Sigmoid colon (tissue), 7 donors: ENCODE measurements at regions of chr3 and their contacts with region 1.

Region 1: DNA sequence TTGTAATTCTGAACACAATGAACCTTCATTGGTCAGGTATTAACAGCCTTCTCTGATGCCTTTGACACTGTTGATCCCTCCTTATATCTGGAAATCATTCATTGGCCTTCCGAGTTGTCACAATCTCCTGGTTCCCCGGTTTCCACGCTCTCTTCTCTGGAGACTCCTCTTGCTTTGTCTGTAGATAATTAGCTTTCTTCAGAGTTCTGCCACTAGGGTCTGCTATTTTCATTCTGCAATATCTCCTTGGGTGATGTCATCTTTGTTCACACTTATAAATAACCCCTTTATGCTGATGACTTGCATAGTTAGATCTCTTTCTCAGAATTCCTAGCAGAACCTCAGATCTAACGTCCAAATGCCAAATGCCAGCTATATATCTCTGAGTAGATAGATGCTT is 583.8 kb upstream of the ZNF717 start:
- DNase-seq: no peak
- H3K4me3 ChIP-seq: no peak overlapping the region
- H3K27ac ChIP-seq: no peak overlapping the region
- H3K4me1 ChIP-seq: no peaks in the 10 kb centered on the region
- H3K27me3 ChIP-seq: no peaks in the 10 kb centered on the region
- CTCF ChIP-seq: peak in 1 of 4 experiments; percentile 14
- EP300 ChIP-seq: no peak
- POLR2A ChIP-seq: no peak

Region 2: DNA sequence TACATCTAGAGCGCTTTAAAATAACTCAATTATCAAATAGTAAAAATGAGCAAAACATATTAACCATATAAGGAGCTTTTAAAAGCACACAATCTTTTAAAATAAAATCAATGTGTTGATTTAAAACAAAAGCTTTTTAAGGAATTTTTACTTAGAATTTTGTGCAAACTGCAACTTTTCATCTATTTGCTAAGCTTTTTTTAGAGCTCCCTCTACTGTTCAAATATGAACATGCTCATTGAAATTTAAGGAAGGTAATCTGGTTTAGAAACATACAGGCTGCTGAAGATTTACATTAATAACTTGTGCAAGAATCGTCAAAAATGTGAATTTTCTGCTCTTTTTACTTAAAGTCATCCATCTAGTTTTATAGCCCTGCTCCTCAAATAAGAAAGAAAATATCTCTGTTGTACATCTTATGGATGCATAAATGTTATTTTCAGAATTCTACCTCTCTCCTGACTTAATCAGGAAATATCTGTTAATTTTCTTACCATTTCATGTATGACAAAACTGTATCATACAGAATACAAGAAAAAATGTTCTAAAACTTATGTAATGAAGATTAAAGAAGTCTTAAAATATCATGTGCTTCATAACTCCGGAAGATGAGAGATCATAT is 201.4 kb after region 1 on chr3:
- intact Hi-C with region 1: loop called (anchors 5 kb)
- DNase-seq: no peak
- H3K4me3 ChIP-seq: no peak overlapping the region
- H3K27ac ChIP-seq: no peak overlapping the region
- H3K4me1 ChIP-seq: peaks cover 0 to 10% (median 4%) of the 10 kb centered on the region in 4 donors
- H3K27me3 ChIP-seq: no peaks in the 10 kb centered on the region
- CTCF ChIP-seq: peak in 1 of 4 experiments; percentile 44
- EP300 ChIP-seq: no peak
- POLR2A ChIP-seq: no peak